ENCODE measurements at regions of chr10 and their contacts with region 1.

Region 1: GRCh38 chr10:114550756-114551635 is 107.1 kb downstream of the ABLIM1 start:
- DNase-seq: no peak

Region 2: DNA sequence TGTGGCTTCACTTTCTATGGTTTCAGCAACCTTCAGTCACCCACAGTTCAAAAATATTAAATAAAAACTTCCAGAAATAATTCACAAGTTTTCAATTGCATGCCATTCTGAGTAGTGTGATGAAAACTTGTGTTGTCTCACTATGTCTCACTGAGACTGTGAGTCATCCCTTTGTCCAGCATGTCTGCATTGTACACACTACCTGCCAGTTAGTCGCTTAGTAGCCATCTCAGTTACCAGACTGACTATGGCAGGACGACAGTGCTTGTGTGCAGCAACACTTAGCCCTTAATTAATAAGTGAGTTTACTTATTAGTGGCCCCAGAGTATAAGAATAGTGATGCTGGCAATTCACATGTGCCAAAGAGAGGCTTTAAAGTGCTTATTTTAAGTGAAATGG is 399.5 kb before region 1 on chr10:
- intact Hi-C with region 1: no loop called
- DNase-seq: no peak

Region 3: DNA sequence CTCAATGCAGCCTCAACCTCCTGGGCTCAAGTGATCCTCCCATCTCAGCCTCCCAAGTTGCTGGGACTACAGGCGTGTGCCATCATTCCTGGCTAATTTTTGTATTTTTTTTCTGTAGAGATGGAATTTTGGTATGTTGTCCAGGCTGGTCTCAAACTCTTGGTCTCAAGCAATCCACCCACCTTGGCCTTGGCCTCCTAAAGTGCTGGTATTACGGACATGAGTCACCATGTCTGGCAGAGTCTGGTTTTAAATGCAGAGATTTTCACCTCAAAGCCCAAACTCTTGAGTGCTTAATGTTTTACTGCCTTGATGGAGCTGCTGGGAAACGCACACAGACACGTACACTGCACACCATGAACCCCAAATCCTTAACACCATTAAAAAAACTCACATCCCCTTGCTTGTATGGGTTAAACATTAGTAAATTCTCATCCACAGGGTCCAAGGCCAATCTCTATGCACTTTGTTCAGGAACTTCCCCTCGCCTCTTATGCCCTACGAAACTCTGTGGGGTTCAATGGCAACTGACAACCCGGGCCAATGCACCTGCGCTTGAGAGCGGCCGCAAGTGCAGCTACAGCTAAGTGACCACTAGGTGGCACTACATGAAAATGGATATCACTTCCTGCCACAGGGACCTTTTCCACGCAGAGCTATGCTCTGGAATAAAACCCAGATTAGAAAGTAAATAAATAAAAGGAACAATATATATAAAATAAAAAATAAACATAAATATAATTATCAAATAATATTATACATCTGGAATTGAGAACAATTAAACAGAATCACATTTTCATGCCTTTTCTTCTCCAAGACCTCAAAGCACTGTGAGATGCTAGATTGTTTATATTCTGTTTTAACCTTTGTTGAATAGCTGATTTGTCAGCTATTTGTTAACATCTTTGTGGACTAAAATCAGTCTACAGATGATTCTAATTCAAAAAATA is 79.8 kb before region 1 on chr10:
- intact Hi-C with region 1: loop called (anchors 2 kb)
- DNase-seq: no peak

Region 4: DNA sequence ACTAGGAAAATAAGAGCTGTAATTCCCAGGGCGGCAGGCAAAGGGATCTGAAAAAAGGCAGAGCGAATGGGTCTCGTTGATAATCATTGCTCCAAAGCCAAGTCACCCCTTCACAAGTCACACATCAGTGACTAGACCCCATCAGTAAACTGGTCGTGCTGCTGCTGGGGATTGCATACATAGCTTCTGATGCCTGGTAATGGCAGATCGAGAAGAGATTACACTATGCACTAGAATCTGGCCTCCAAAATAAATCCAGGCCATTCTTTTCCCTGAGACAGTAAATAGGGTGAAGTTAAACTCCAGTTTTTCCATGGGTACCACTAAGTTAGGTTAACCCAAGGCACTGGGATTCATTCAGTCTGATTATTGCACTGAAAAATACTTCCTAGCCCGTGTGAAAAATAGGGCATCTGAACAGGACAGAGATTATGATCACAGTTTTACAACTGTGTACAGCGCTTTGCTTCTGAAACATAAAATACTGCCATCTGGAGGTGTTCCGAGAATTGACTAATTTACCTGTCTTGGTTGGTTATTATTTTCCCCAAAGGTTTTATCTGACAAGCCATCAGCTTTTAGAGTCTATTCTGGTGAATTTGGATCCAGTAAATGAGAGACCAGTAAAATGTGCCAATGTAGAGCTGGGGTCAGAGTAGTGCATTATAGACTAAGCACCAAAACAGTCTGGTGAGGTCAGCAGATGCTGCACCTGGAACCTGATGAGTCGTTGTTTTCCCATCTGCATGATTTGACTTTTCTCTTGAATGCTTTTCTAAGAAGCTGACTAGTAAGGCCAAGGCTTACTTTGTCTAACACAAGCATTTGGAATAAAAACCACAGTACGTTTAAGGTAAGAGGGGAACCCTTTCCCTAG is 63.8 kb before region 1 on chr10:
- intact Hi-C with region 1: no loop called
- DNase-seq: no peak

Region 5: DNA sequence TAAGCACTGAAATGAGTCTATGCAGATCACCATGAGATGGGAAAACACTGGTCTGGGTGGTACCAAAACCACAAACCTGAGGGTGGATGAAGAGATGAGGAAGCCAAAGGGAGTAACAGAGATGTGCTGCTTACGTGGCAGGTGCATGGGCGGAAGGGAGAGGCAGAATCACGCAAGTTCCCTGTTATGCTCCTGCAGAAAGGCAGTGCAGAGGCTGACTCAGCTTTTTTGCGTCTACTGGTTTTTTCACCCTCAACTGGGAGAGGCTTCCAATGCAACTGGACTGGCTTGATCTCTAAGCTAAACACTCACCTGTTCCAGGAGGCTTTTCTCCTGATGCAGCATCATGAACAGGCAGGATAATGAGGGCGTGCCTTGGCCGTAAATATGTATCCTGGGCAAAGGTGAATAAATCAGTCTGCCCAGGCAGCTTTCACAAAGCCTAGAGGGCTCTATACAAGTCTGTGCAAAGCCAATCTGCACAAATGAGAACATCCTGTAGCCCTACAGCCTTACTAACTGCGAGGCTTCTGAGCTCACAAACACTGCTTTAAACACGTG is 51.3 kb before region 1 on chr10:
- intact Hi-C with region 1: no loop called
- DNase-seq: no peak

Region 6: DNA sequence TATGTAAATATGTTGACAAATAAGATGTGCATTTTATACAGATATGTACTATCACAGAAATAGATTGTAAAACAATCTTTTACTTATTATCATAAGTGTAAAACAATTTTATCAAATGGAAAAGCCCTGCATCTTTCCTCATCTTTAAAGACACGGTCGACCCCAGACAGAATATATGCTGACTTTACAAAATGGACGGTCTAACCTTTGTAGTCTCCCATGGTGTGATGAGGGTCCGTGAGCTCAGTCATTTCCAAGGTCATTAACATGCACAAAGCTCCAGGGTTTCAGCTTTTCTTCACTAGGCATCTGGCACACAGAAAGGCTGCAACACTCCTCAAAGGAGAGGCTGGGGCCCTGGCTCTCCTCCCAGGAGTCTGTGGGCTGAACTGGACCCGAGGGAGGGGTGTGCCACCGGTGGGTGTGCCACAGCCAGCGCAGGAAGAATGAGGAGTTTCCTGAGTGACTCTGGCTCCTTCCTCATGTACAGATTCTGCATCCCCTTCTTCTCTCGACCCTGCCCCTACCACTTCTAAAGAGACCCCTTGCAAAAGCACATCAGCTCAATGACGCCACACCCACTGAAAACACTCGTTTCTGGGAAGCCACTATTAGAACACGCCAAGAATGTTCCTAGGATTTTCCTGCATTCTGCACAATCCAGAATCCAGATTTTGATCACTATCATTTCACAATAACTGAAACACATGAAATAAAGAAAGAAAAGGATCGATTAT is 133.3 kb after region 1 on chr10:
- intact Hi-C with region 1: loop called (anchors 5 kb)
- DNase-seq: peak; percentile 84

Region 7: DNA sequence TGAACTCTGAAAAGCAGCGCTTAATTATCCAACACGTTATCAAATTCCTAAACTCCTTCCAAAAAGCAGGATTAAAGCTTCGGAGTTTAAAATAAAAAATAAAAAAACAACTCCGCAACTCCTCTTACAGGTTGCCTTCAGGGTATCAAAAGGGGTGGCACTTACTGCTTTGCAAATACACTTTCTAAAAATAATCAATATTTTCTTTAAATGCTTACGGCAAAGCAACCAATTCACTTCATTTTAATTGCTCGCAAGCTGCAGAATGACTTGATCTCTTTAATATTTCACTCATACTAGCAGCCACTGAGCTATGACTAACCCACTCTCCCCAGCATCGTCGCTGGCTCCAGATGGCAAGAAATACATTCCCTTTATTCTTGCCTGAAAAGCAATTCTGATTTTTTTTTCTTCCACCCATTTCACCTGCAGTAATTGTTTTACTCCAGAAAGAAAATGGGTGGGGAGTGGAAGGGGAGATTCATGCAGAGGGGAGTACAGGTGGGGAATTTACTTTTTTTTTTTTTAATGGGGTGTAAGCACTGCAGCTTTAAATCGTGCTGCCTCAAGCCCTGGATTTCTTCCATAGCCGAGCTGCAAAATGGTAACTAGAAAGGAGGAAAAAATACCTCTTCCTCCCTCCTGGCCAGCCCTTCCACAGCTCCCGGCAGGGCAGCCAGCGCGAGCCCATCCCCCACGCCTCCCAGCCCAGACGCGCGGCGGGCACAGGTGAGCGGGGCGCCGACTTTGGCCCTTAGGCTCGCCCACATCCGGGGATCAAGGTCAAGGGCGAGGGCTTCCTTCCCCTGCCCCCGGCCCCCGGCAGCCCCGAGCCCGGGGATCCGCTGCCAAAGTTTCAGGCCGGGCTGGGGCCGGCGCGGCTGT is 216.3 kb after region 1 on chr10:
- intact Hi-C with region 1: loop called (anchors 5 kb)
- DNase-seq: peak; percentile 79